ENCODE measurements at regions of chr6 and their contacts with region 1.

Region 1: DNA sequence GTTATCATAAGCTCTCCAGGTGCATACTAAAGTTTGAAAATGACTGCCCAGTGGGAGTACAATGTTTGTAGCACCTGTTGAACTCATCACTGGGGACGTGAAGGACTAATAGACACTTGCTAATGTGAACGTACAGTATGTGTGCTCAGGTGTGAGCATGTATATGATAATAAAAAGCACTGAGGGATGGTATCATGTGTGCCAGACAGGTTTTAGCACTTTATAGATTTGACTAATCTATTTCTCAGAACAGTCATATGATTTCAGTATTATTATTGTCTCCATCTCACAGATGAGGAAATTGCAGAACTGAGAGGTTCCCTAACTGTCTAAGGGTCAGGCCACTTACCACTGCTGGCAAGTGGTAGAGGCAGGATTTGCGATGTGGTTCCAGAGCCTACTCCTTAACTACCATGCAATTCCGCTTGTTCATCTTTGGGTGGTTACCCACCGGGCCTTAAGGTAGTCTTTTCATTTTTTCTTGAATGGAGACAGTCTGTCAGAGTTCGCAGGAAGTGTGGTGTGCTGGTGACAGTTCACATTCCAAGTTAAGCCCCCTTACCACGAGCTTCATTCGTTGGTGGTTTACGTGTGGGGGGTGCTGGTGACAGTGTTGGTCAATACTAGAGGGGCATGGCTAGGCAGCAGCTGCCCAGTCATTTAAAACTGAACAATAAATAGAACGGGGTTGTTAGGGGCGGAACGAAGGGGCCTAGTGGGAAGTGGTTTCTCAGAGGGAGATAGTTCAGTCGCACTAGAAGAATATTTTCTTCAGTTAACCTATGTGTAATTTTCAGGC is 46.8 kb downstream of the RREB1 start:
- DNase-seq: no peak
- CTCF ChIP-seq: no peak

Region 2: GRCh38 chr6:7004581-7005297 is 149.8 kb before region 1 on chr6:
- CTCF ChIA-PET with region 1: no interaction called
- POLR2A ChIA-PET with region 1: no interaction called
- DNase-seq: no peak
- CTCF ChIP-seq: no peak

Region 3: GRCh38 chr6:7166410-7167305 is 12.1 kb after region 1 on chr6:
- CTCF ChIA-PET with region 1: interaction called, 10 read pairs
- POLR2A ChIA-PET with region 1: no interaction called
- DNase-seq: no peak
- CTCF ChIP-seq: no peak

Region 4: GRCh38 chr6:7292596-7293255 is 138.2 kb after region 1 on chr6:
- CTCF ChIA-PET with region 1: no interaction called
- POLR2A ChIA-PET with region 1: no interaction called
- DNase-seq: no peak
- CTCF ChIP-seq: no peak

Measured in GM10248 (cell line).